Activated CD8-positive, alpha-beta memory T cell treated with anti-CD3 and anti-CD28 coated beads, Interleukin-2, amount 10 ng/mL, durations not matched to agents 7 days and 5 days (primary cell): ENCODE measurements at regions of chr1 and their contacts with region 1.

Region 1: DNA sequence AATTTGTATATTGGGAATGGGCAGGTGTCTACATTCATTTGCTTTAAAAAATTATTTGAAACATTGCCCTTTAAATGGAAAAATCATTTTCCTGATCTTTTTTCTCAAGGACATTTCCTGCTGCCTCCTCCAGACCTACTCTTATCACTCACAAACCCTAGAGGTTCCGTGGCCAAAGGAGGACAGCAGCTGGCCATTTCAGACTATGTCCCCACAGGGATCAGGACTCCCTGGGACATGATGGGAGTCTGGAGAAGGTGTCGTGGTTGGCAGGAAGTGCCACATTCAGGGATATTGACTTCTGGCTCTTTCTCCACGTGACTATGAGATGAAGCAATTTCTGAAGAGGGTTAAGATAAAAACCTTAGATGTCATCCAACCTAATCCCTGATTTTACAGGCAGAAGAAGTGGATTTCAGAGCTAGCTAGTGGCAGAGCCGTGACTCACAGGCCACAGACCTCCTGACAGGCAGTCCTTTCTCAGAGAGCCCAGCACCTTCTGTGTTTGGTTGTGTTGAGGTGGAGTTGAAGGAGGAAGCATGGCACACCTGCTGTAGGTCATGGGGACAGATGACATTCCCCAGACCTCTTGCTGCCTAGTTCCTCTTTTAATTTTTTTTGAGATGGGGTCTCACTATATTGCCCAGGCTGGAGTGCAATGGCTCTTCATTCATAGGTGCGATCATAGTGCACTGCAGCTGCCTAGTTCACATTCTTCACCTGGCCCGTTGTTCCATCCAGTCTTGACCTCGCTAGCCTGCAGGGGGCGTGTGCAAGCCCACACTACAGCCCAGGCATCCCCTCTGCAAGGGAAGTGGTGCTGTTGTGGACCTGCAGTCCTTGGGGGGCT is 25.5 kb upstream of the IL10 start:
- DNase-seq: no peak
- ATAC-seq: peak; percentile 52
- H3K4me3 Mint-ChIP-seq: no peak overlapping the region
- H3K27ac Mint-ChIP-seq: no peak overlapping the region
- H3K4me1 Mint-ChIP-seq: peaks cover 60% of the 10 kb centered on the region
- H3K27me3 Mint-ChIP-seq: peaks cover 39% of the 10 kb centered on the region

Region 2: GRCh38 chr1:206455666-206456344 is 342.0 kb before region 1 on chr1:
- CTCF ChIA-PET with region 1: no interaction called
- DNase-seq: no peak
- ATAC-seq: no peak
- H3K4me3 Mint-ChIP-seq: no peak overlapping the region
- H3K27ac Mint-ChIP-seq: no peak overlapping the region
- H3K4me1 Mint-ChIP-seq: peaks cover 14% of the 10 kb centered on the region
- H3K27me3 Mint-ChIP-seq: no peaks in the 10 kb centered on the region

Region 3: DNA sequence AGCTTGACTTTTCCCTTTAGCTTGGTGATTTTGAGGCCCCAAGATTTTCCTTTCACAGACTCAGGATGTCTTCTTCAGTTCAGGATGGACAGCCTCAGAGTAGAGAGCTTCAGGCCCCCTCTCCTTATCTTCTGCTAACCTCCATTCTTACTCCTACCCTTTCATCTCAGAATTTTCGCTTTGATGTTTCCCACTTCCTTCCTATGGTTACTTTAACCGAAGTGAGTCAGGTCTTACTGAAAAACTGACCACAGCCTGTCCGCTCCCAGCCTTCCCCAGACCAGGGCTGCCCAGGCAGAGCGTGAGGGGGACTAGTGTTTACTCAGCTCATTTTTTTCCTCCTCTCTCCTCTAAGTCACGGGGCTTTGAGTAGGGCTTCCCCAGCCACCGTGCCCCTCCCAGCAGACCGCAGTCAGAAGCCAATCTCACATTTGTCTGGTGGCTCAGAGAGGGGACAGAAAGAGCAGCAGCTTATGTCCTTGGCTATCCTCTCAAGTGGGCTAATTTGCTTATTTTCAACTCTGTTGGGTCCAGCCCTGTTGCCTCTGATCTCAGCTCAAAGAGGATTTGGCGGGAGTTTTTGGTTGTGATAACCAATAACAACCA is 31.4 kb before region 1 on chr1:
- CTCF ChIA-PET with region 1: interaction called, 61 read pairs
- DNase-seq: peak; percentile 91
- ATAC-seq: peak; percentile 68
- H3K4me3 Mint-ChIP-seq: peak overlapping the region; percentile 13
- H3K27ac Mint-ChIP-seq: peak overlapping the region; percentile 80
- H3K4me1 Mint-ChIP-seq: peaks cover 64% of the 10 kb centered on the region
- H3K27me3 Mint-ChIP-seq: peaks cover 34% of the 10 kb centered on the region